ENCODE measurements at regions of chr14 and their contacts with region 1.

Region 1: DNA sequence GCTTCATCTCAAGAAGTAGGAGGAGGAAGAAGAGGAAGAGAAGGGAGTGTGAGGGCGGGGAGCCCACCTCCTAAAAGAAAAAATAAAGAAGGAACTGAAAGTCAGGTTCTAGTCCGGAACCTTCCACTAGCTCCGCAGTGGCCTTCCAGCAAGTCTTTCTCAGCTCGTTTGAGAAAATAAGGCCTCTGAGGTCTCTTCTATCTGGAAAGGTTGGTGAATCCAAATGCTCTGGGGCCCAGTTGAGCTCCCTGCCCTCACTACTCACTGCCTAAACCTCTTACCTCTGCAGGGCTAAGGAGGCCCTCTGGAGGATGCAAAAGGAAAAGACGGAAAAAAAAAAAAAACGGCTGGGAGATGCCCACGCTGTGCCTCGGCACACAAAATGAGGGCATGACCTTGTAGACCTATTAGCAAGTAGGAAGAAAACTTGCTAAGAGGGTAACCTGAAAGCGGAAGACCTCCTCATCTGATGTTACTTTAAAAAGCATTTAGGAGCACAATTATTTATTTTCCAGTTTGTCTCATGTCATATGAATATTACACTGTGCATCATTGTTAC is 35.9 kb downstream of the FBLN5 start:
- DNase-seq: peak in 7 of 9 experiments; percentile 11 to 78 (median 60)
- ATAC-seq: peak; percentile 96
- H3K4me3 ChIP-seq: no peak overlapping the region
- H3K4me3 Mint-ChIP-seq: no peak overlapping the region
- H3K27ac ChIP-seq: no peak overlapping the region
- H3K27ac Mint-ChIP-seq: no peak overlapping the region
- H3K4me1 ChIP-seq: peaks cover 5% of the 10 kb centered on the region
- H3K4me1 Mint-ChIP-seq: peaks cover 19% of the 10 kb centered on the region
- H3K27me3 ChIP-seq: no peaks in the 10 kb centered on the region
- H3K27me3 Mint-ChIP-seq: no peaks in the 10 kb centered on the region
- CTCF ChIP-seq: peak; percentile 56

Region 2: GRCh38 chr14:91482263-91483013 is 429.1 kb before region 1 on chr14:
- CTCF ChIA-PET with region 1: interaction called, 3 read pairs
- POLR2A ChIA-PET with region 1: no interaction called
- intact Hi-C with region 1: loop called (anchors 5 to 10 kb)
- DNase-seq: no peak
- ATAC-seq: no peak
- H3K4me3 ChIP-seq: no peak overlapping the region
- H3K4me3 Mint-ChIP-seq: no peak overlapping the region
- H3K27ac ChIP-seq: no peak overlapping the region
- H3K27ac Mint-ChIP-seq: peak overlapping the region; percentile 38
- H3K4me1 ChIP-seq: peaks cover 7% of the 10 kb centered on the region
- H3K4me1 Mint-ChIP-seq: peaks cover 78% of the 10 kb centered on the region
- H3K27me3 ChIP-seq: no peaks in the 10 kb centered on the region
- H3K27me3 Mint-ChIP-seq: no peaks in the 10 kb centered on the region
- CTCF ChIP-seq: no peak

Region 3: DNA sequence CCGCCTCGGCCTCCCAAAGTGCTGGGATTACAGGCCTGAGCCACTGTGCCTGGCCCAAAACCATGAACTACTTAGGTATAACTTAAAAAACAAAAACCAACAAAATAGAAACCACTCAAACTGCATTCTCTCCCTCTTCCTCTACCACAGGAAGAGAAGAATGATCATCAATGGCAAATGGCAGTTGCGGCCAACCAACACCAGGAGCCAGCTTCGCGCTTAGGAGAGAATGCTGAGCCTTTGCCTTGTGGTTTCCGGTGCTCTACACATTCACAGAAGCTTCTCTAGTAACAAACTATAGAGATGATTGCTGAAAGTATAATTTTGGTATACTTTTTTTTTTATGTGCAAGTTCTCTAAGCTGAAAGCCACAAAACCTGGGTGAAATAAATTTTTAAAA is 196.7 kb before region 1 on chr14:
- CTCF ChIA-PET with region 1: interaction called, 8 read pairs
- POLR2A ChIA-PET with region 1: no interaction called
- intact Hi-C with region 1: loop called (anchors 1 to 5 kb)
- DNase-seq: peak in 8 of 9 experiments; percentile 27 to 69 (median 54)
- ATAC-seq: peak; percentile 99
- H3K4me3 ChIP-seq: no peak overlapping the region
- H3K4me3 Mint-ChIP-seq: peak overlapping the region; percentile 70
- H3K27ac ChIP-seq: no peak overlapping the region
- H3K27ac Mint-ChIP-seq: peak overlapping the region; percentile 72
- H3K4me1 ChIP-seq: peaks cover 13% of the 10 kb centered on the region
- H3K4me1 Mint-ChIP-seq: peaks cover 17% of the 10 kb centered on the region
- H3K27me3 ChIP-seq: no peaks in the 10 kb centered on the region
- H3K27me3 Mint-ChIP-seq: no peaks in the 10 kb centered on the region
- CTCF ChIP-seq: peak; percentile 19

Region 4: GRCh38 chr14:91827746-91828145 is 83.8 kb before region 1 on chr14:
- CTCF ChIA-PET with region 1: interaction called, 13 read pairs
- POLR2A ChIA-PET with region 1: no interaction called
- intact Hi-C with region 1: no loop called
- DNase-seq: no peak
- ATAC-seq: no peak
- H3K4me3 ChIP-seq: no peak overlapping the region
- H3K4me3 Mint-ChIP-seq: no peak overlapping the region
- H3K27ac ChIP-seq: no peak overlapping the region
- H3K27ac Mint-ChIP-seq: no peak overlapping the region
- H3K4me1 ChIP-seq: peaks cover 15% of the 10 kb centered on the region
- H3K4me1 Mint-ChIP-seq: peaks cover 62% of the 10 kb centered on the region
- H3K27me3 ChIP-seq: no peaks in the 10 kb centered on the region
- H3K27me3 Mint-ChIP-seq: no peaks in the 10 kb centered on the region
- CTCF ChIP-seq: no peak

Region 5: GRCh38 chr14:91866061-91866460 is 45.5 kb before region 1 on chr14:
- CTCF ChIA-PET with region 1: interaction called, 14 read pairs
- POLR2A ChIA-PET with region 1: interaction called, 11 read pairs
- intact Hi-C with region 1: loop called (anchors 2 to 5 kb)
- DNase-seq: peak in 5 of 9 experiments; percentile 25 to 59 (median 32)
- ATAC-seq: no peak
- H3K4me3 ChIP-seq: peak overlapping the region; percentile 61 to 80
- H3K4me3 Mint-ChIP-seq: peak overlapping the region; percentile 95
- H3K27ac ChIP-seq: peak overlapping the region; percentile 83 to 86
- H3K27ac Mint-ChIP-seq: peak overlapping the region; percentile 99
- H3K4me1 ChIP-seq: peaks cover 82% of the 10 kb centered on the region
- H3K4me1 Mint-ChIP-seq: peaks cover 90% of the 10 kb centered on the region
- H3K27me3 ChIP-seq: no peaks in the 10 kb centered on the region
- H3K27me3 Mint-ChIP-seq: no peaks in the 10 kb centered on the region
- CTCF ChIP-seq: no peak

Region 6: GRCh38 chr14:91899212-91899611 is 12.3 kb before region 1 on chr14:
- CTCF ChIA-PET with region 1: interaction called, 25 read pairs
- POLR2A ChIA-PET with region 1: interaction called, 8 read pairs
- intact Hi-C with region 1: no loop called
- DNase-seq: peak in 3 of 9 experiments; percentile 30 to 53 (median 49)
- ATAC-seq: no peak
- H3K4me3 ChIP-seq: no peak overlapping the region
- H3K4me3 Mint-ChIP-seq: no peak overlapping the region
- H3K27ac ChIP-seq: no peak overlapping the region
- H3K27ac Mint-ChIP-seq: no peak overlapping the region
- H3K4me1 ChIP-seq: peaks cover under 1% of the 10 kb centered on the region
- H3K4me1 Mint-ChIP-seq: peaks cover 19% of the 10 kb centered on the region
- H3K27me3 ChIP-seq: no peaks in the 10 kb centered on the region
- H3K27me3 Mint-ChIP-seq: no peaks in the 10 kb centered on the region
- CTCF ChIP-seq: no peak

Region 7: DNA sequence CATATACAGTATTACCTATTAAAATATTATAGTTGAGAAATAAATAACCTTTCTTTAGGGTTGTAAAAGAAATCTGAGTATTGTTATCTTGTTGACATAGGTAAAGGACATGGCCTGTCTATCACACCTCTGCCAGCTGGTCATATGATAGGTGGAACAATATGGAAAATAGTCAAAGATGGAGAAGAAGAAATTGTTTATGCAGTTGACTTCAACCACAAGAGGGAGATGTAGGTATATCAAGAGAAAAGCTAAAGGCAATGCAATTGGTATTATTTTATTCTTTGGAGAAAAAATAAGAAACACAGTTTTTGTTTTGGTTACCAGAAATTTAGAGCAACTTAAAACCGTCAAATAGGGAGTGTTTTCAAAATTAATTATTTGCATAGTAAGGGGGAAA is 223.7 kb after region 1 on chr14:
- CTCF ChIA-PET with region 1: no interaction called
- POLR2A ChIA-PET with region 1: no interaction called
- intact Hi-C with region 1: no loop called
- DNase-seq: peak in 2 of 9 experiments; percentile 31 to 53
- ATAC-seq: no peak
- H3K4me3 ChIP-seq: no peak overlapping the region
- H3K4me3 Mint-ChIP-seq: no peak overlapping the region
- H3K27ac ChIP-seq: no peak overlapping the region
- H3K27ac Mint-ChIP-seq: no peak overlapping the region
- H3K4me1 ChIP-seq: no peaks in the 10 kb centered on the region
- H3K4me1 Mint-ChIP-seq: peaks cover 2% of the 10 kb centered on the region
- H3K27me3 ChIP-seq: no peaks in the 10 kb centered on the region
- H3K27me3 Mint-ChIP-seq: no peaks in the 10 kb centered on the region
- CTCF ChIP-seq: peak; percentile 37

Measured in CD8-positive, alpha-beta T cell (primary cell).